BJ (cell line): ENCODE measurements at regions of chr1 and their contacts with region 1.

Region 1: DNA sequence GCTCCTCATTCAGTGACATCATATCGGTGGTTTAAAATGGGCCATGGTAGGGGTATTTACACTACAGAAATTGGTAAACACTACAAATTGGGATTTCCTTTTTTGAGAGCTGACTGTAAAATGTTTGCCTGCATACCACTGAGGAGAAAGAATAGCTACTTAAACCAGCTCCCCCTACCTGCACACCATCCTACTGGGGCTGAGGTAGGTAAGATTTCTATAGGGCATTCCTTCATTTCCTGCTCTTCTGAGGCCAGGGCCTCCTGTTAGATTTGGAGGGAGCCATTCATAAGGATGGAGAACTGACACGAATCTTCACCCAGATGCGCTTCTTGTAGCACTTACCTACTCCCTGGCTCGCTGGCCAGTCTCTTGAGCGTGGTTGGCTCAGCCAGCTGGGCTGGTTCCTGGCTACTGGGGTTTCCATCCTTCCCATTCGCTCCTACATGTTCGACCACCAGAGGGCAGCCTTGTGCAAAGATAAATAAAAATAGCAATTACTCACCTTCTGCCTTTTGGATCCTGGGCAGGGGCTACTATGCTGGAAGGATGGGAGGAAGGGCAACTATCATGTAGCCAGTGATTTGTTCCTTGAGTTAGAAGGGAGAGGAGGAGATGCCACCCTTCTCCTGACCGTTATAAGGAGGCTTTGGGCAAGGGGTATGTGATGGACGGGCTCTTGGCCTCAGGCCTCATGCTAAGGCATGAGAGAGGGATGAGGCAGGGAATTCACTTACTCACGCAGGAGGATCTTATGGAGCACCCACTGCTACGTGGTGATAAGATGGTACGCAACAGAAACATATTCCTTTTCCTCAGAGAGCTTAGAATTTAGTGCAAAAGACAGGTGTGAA is 10.7 kb downstream of the OPTC start:
- DNase-seq: no peak
- H3K4me3 ChIP-seq: no peak overlapping the region
- H3K27me3 ChIP-seq: no peaks in the 10 kb centered on the region
- CTCF ChIP-seq: peak; percentile 74

Region 2: DNA sequence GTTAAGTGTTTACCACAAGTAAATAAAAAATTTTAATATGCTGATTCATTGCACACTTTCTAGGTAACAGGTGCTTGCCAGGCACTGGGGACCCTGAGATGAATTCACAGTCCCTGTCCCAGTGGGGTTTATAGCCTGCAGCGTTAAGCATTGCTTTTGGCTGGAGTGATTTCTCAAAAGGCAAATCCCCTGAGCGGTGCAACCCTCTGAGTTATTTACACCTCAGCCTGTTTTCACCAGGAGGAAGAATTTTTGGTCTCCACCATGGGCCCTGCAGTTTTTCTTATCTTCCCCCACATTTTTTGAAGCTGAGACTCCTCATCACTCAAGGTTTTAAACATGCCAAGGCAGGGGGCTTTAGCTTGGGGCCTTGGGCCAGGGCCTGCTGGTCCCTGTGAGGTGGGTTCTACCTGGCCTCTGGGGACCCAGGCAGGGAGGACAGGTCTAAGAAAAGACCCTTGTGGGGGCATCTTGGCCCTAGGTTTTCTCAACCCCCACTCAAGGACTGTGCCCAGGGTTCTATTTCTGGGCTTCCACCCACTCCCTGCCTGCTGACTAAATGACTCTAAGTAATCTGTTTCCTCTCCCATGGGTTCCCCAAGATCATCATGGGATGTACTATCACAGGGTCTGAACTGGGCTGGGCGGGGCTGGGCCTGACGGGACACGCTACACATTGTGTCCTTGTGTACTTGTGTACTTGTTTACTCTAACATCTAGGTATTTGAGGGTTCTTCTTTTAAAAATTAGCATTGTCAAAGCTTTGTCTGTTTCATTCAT is 264.9 kb before region 1 on chr1:
- CTCF ChIA-PET with region 1: no interaction called
- POLR2A ChIA-PET with region 1: no interaction called
- DNase-seq: no peak
- H3K4me3 ChIP-seq: no peak overlapping the region
- H3K27me3 ChIP-seq: no peaks in the 10 kb centered on the region; the same call in none of the 2 replicates
- CTCF ChIP-seq: no peak

Region 3: DNA sequence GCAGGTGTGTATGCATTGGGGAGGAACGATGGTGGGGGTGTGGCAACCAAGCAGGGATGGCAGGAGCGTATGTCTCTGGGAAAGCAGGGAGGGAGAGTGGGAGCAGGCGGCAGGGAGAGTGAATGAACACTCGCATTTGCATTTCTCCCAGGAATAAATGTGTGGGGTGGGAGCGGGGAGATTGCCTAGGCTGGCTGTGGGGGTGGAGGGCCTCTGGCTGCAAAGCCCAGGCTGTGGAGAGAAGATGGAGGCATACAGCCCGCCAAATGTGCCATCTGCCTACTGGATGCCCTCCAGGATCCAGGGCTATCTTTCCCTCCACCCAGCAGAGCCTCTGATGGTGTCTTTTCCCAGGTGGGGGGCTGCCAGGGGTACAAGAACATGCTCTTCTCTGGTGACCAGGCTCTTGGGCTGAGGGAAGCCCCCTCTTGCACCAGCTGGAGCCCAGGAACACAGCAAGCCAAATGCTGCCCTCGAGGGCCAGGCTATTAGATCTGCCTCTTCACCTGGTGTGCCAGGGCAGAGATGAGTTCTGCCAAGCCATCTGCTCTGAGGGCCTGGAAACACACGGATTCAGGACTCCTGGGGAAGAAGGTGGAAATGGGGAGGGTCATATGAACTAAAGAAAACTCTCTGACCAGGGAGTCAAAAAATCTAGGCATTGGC is 12.4 kb before region 1 on chr1:
- CTCF ChIA-PET with region 1: interaction called, 19 read pairs
- POLR2A ChIA-PET with region 1: no interaction called
- DNase-seq: no peak
- H3K4me3 ChIP-seq: no peak overlapping the region
- H3K27me3 ChIP-seq: no peaks in the 10 kb centered on the region
- CTCF ChIP-seq: no peak

Region 4: GRCh38 chr1:203673550-203674427 is 169.2 kb after region 1 on chr1:
- CTCF ChIA-PET with region 1: interaction called, 10 read pairs
- POLR2A ChIA-PET with region 1: no interaction called
- DNase-seq: peak; percentile 83
- H3K4me3 ChIP-seq: no peak overlapping the region
- H3K27me3 ChIP-seq: no peaks in the 10 kb centered on the region
- CTCF ChIP-seq: no peak; the same call in 1 of the 2 replicates

Region 5: DNA sequence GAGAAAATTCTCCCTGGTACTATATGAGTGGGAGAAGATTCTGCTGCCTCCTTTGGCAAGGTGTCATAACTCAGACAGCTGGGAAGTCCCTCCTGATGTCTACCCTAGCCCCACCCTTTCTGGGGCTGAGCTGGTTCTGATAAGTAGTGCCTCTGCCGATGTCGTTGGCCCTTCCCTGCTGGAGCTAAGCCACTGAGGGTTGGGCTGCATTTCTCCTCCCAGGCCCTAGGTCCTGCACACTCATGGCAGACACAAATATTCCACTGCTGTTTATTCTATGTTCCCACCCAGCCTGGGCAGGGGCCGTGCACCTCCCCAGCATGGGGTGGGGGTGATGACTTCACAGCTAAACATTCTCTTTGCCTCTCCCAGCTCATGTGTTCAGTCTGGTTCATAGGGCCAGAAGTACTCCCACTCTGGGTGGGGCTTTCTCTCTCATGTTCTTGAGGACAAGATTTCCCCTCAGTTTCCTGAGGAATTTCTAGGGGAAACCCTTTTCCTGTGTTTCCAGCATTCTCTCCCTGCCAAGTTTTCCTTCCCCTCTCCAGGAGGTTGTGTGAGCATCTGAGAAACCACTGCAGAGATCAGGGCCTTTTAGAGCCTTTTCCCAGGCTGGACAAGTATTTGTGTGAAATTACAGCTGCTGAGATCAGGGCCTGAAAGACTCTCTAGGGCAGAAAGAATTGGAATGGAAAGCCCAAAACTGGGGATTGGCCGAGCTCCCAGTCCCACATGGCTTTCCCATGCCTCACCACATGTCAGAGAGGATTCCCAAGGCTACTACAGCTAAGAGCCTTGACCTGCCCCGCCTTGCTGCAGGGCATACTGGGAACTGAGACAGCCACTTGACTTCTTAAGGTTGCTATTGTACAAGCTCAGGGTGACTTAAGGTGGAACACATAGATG is 188.2 kb after region 1 on chr1:
- CTCF ChIA-PET with region 1: interaction called, 26 read pairs
- POLR2A ChIA-PET with region 1: no interaction called
- DNase-seq: peak; percentile 97
- H3K4me3 ChIP-seq: no peak overlapping the region
- H3K27me3 ChIP-seq: no peaks in the 10 kb centered on the region
- CTCF ChIP-seq: no peak

Region 6: GRCh38 chr1:203702130-203702577 is 197.5 kb after region 1 on chr1:
- CTCF ChIA-PET with region 1: interaction called, 92 read pairs
- POLR2A ChIA-PET with region 1: no interaction called
- DNase-seq: no peak
- H3K4me3 ChIP-seq: no peak overlapping the region
- H3K27me3 ChIP-seq: no peaks in the 10 kb centered on the region
- CTCF ChIP-seq: peak; percentile 64